MCF 10A (cell line): ENCODE measurements at regions of chr16 and their contacts with region 1.

Region 1: GRCh38 chr16:85750827-85751697 is at the start of gene C16orf74:
- DNase-seq: peak; percentile 70
- H3K4me3 Mint-ChIP-seq: peak within 1 kb of the TSS; percentile 79
- H3K27ac Mint-ChIP-seq: no peak within 1 kb of the TSS
- H3K4me1 Mint-ChIP-seq: peaks cover 31% of the 10 kb centered on the region
- H3K27me3 Mint-ChIP-seq: no peaks in the 10 kb centered on the region
- CTCF ChIP-seq: no peak
- total RNA-seq, gene C16orf74: 62.6 and 68.5 TPM in 2 replicates

Region 2: DNA sequence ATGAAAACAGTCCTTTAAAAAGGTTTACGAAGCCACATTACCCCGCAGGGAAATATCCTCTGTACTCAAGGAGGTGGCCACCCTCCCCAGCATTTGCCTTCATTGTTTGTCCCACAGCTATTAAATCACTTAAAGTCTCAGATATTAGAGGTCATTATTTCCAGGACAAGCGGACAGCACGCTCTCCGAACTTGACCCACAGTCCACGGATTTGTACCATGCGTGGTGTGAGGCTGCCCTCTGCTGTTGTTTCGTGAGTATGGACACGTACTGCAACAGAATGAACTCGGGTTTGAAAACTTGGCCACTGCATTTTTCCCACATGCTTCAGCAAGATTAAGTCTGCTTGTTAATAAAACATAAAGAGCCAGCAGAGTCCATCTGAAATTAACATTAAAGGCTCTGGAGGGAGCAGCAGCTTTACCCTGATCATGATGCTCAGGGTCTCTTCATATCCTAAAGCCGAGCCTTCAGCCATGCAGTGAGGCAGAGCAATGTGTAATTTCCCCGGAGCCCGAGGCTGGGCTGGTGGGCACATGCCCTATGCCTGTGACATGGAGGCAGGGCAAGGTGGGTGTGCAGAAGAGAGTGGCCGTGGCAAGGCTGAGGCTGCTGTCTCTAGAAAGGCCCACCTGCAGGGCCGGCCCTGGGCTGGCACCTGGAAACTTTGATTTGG is 1266.3 kb before region 1 on chr16:
- CTCF ChIA-PET with region 1: no interaction called
- POLR2A ChIA-PET with region 1: no interaction called
- intact Hi-C with region 1: no loop called
- DNase-seq: peak; percentile 45
- H3K4me3 Mint-ChIP-seq: no peak overlapping the region
- H3K27ac Mint-ChIP-seq: no peak overlapping the region
- H3K4me1 Mint-ChIP-seq: no peaks in the 10 kb centered on the region
- H3K27me3 Mint-ChIP-seq: no peaks in the 10 kb centered on the region
- CTCF ChIP-seq: peak; percentile 49

Region 3: GRCh38 chr16:85707528-85708321 is 43.3 kb before region 1 on chr16:
- CTCF ChIA-PET with region 1: no interaction called
- POLR2A ChIA-PET with region 1: no interaction called
- intact Hi-C with region 1: no loop called
- DNase-seq: no peak
- H3K4me3 Mint-ChIP-seq: no peak overlapping the region
- H3K27ac Mint-ChIP-seq: no peak overlapping the region
- H3K4me1 Mint-ChIP-seq: peaks cover 4% of the 10 kb centered on the region
- H3K27me3 Mint-ChIP-seq: no peaks in the 10 kb centered on the region
- CTCF ChIP-seq: no peak

Region 4: GRCh38 chr16:85735225-85735635 is 15.8 kb before region 1 on chr16:
- CTCF ChIA-PET with region 1: interaction called, 11 read pairs
- POLR2A ChIA-PET with region 1: no interaction called
- intact Hi-C with region 1: no loop called
- DNase-seq: no peak
- H3K4me3 Mint-ChIP-seq: no peak overlapping the region
- H3K27ac Mint-ChIP-seq: no peak overlapping the region
- H3K4me1 Mint-ChIP-seq: peaks cover 6% of the 10 kb centered on the region
- H3K27me3 Mint-ChIP-seq: no peaks in the 10 kb centered on the region
- CTCF ChIP-seq: no peak

Region 5: GRCh38 chr16:85781695-85782370 is 30.8 kb after region 1 on chr16:
- CTCF ChIA-PET with region 1: interaction called, 4 read pairs
- POLR2A ChIA-PET with region 1: interaction called, 9 read pairs
- intact Hi-C with region 1: loop called (anchors 2 kb)
- DNase-seq: peak; percentile 71
- H3K4me3 Mint-ChIP-seq: no peak overlapping the region
- H3K27ac Mint-ChIP-seq: peak overlapping the region; percentile 1
- H3K4me1 Mint-ChIP-seq: peaks cover 23% of the 10 kb centered on the region
- H3K27me3 Mint-ChIP-seq: no peaks in the 10 kb centered on the region
- CTCF ChIP-seq: no peak

Region 6: GRCh38 chr16:85799497-85800337 is 48.7 kb after region 1 on chr16 and contains the starts of genes COX4I1 and EMC8:
- CTCF ChIA-PET with region 1: interaction called, 4 read pairs
- POLR2A ChIA-PET with region 1: interaction called, 14 read pairs
- intact Hi-C with region 1: loop called (anchors 5 kb)
- DNase-seq: peak; percentile 93
- H3K4me3 Mint-ChIP-seq: peak within 1 kb of the TSS; percentile 85
- H3K27ac Mint-ChIP-seq: peak within 1 kb of the TSS; percentile 91
- H3K4me1 Mint-ChIP-seq: peaks cover 36% of the 10 kb centered on the region
- H3K27me3 Mint-ChIP-seq: no peaks in the 10 kb centered on the region
- CTCF ChIP-seq: no peak
- total RNA-seq, gene COX4I1: 618 and 642 TPM in 2 replicates
- total RNA-seq, gene EMC8: 68.5 and 71.1 TPM in 2 replicates